Mammary epithelial cell (primary cell): ENCODE measurements at regions of chr22 and their contacts with region 1.

Region 1: GRCh38 chr22:17945888-17946648 is 78.3 kb downstream of the MICAL3 start:
- DNase-seq: no peak
- H3K4me3 ChIP-seq: no peak overlapping the region
- H3K27ac ChIP-seq: no peak overlapping the region
- H3K4me1 ChIP-seq: peaks cover 30% of the 10 kb centered on the region
- H3K27me3 ChIP-seq: no peaks in the 10 kb centered on the region
- CTCF ChIP-seq: peak in 1 of 2 donors; percentile 20

Region 2: GRCh38 chr22:17785185-17786184 is 160.6 kb before region 1 on chr22:
- CTCF ChIA-PET with region 1: no interaction called
- dilution Hi-C with region 1: no loop called
- in situ Hi-C with region 1: no loop called
- intact Hi-C with region 1: no loop called
- DNase-seq: peak; percentile 39
- H3K4me3 ChIP-seq: no peak overlapping the region
- H3K27ac ChIP-seq: no peak overlapping the region
- H3K4me1 ChIP-seq: peaks cover 33% of the 10 kb centered on the region
- H3K27me3 ChIP-seq: no peaks in the 10 kb centered on the region
- CTCF ChIP-seq: peak; percentile 61 to 72

Region 3: DNA sequence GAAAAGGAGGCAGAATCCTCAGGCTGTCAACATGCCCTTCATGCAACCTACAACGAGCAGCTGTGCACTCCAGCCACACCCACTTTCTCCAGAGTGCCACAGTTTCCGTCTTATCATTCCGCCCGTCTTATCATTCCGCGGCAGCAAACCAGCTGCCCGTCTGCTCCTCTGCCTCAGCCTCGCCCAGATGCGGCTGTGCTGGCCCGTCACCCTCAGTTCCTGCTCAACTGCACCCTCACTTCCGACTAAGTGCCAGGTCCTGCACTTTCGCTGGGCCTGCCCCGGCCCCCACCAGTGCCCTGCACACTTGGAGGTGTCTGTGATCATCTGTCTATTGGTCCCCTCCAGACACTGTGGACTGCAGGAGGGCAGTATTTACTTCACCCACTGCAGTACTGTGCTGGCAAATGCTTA is 34.6 kb after region 1 on chr22:
- CTCF ChIA-PET with region 1: interaction called, 5 read pairs
- dilution Hi-C with region 1: no loop called
- in situ Hi-C with region 1: no loop called
- intact Hi-C with region 1: loop called (anchors 5 kb)
- DNase-seq: no peak
- H3K4me3 ChIP-seq: no peak overlapping the region
- H3K27ac ChIP-seq: no peak overlapping the region
- H3K4me1 ChIP-seq: no peaks in the 10 kb centered on the region
- H3K27me3 ChIP-seq: no peaks in the 10 kb centered on the region
- CTCF ChIP-seq: no peak